Dorsolateral prefrontal cortex (tissue), 120 donors: ENCODE measurements at regions of chr9 and their contacts with region 1.

Region 1: DNA sequence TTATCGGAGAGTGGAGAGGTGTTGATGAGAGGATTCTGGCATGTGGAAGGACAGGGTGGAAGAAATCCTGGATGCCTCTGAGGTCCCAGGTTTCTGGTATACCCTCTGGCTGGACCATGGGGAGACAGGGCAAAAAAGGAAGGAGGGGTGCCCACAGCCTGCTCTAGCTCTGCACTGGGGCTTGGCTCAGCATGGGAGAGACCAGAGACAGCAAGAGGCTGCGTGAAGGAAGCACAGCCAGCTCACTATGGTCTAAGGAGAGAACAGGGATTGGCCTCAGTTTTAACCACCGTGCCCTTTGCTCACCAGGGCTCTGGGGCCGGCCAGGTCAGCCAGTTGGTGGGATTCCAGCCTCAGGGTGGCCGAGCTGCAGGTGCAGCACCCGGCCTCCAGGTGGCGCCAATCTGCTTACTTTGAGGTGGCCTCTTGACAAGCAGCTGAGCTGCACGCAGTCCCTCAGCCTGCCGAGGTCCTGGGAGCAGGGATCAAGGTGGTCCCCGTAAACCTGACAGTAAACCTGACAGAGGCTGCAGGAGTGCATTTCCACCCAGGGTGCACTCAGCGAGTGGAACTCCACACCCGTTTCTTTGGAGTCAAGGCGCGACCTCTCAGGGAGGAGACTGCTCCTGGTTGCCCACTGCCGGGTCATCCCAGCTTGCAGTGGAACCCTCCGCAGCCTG is 25.0 kb upstream of the SPTLC1 start:
- DNase-seq: peak; percentile 59 to 77 (median 67)
- H3K4me3 ChIP-seq: peak overlapping the region in 33 of 59 donors; percentile 11 to 61 (median 41)
- H3K27ac ChIP-seq: no peak overlapping the region
- H3K27me3 ChIP-seq: peaks cover 0 to 24% (median 12%) of the 10 kb centered on the region in 45 donors
- CTCF ChIP-seq: peak; percentile 66 to 95 (median 89)

Region 2: DNA sequence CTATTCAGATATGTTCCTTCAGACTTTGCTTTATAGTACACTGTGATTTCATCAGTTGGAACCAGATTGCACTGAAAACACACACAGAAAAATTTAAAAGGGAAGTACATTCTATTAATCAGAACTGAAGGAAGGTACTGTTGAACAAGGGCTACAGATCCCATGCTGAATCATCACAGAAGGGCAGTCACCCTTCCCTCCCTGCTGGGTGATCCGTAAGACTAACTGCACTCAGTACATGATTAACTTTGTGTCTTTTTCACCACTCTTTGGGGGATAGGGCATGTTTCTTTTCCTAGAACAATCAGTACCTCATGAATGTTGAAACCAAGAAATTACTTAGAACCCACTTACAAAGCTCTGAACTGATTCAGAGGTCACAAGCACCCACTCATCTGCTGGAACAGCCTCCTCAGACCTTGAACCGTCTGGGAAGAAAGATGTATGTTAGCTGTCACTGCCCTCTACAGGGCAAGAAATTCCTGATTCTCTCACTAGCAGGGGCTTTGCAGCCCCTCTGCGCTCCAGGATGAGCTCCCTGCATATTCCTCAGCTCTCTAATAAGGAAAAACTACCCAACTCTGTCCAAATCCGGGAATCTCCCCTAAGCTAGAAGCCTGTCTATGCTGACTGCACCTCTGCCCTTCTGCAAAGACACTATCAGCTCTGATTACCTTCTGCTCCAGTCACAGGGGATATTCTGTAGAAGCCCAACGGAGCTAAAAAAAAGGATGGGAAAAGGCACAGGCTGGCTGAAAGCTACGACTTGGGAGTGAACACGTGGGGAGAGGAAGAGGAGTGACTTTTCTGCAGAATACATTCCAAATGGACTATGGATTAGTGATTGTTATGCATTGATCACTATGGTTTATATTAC is 102.3 kb after region 1 on chr9:
- intact Hi-C with region 1: loop called (anchors 2 kb)
- DNase-seq: no peak
- H3K4me3 ChIP-seq: no peak overlapping the region
- H3K27ac ChIP-seq: no peak overlapping the region
- H3K27me3 ChIP-seq: no peaks in the 10 kb centered on the region
- CTCF ChIP-seq: peak in 47 of 56 donors; percentile 14 to 59 (median 41)

Region 3: GRCh38 chr9:92293452-92294296 is 153.5 kb after region 1 on chr9 and contains the start of gene IARS1:
- intact Hi-C with region 1: loop called (anchors 5 to 10 kb)
- DNase-seq: peak; percentile 96 to 100 (median 99)
- H3K4me3 ChIP-seq: peak within 1 kb of the TSS; percentile 58 to 99 (median 85)
- H3K27ac ChIP-seq: peak within 1 kb of the TSS in 51 of 59 donors; percentile 26 to 83 (median 63)
- H3K27me3 ChIP-seq: no peaks in the 10 kb centered on the region
- CTCF ChIP-seq: peak in 55 of 56 donors; percentile 14 to 84 (median 66)
- total RNA-seq, gene IARS1: 50.3 to 131 (median 98.3) TPM

Region 4: GRCh38 chr9:92634712-92635605 is 494.7 kb after region 1 on chr9:
- intact Hi-C with region 1: loop called (anchors 2 to 5 kb)
- DNase-seq: peak; percentile 60 to 84 (median 72)
- H3K4me3 ChIP-seq: no peak overlapping the region
- H3K27ac ChIP-seq: peak overlapping the region in 22 of 59 donors; percentile 1 to 63 (median 40)
- H3K27me3 ChIP-seq: no peaks in the 10 kb centered on the region
- CTCF ChIP-seq: peak; percentile 71 to 98 (median 92)

Region 5: DNA sequence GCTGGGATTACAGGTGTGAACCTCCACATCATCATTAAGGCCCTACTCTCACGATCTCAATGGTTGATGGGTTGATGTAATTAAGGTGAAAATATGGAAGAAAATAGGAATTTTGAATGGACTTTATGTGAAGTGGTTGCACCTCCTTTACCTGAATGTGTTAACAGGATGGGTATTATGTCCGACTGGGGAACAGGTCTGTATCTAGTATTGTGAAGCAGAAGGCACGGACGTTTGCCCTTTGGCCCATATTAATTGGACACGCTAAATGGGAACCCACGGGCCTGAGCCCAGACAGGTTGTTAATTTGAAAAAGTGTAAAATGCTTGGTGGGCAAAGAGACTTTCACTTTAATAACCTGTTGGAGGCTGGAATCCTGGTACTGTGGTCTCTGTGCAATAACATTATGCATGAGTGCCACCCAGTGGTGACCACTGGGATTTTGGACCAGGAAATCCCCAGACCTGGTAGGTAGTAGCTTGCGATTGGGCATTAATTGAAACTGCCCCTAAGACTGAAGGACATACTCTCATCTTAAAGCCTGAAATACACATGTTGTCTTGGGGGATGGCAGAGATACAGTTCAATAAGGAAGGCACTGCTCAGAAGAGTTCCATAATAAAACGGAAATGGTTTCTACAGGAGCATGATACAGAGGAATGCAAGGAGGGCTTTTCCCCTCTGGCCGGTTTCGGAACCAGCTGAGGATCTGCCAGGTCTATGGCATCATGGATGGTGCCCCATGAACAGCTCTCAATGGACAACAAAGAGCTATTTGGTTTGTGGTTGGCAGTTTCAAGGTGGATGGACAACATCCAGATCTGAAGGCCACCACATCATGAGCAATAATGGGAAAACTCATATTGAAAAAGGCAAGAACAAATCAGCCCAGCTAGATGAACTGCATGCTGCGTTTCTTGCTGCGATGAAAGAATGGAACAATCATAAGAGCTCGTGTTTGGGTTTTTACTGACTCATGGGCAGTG is 650.6 kb after region 1 on chr9:
- intact Hi-C with region 1: loop called (anchors 5 to 10 kb)
- DNase-seq: peak; percentile 70 to 90 (median 80)
- H3K4me3 ChIP-seq: peak overlapping the region in 30 of 59 donors; percentile 4 to 53 (median 30)
- H3K27ac ChIP-seq: no peak overlapping the region
- H3K27me3 ChIP-seq: peaks cover 0 to 4% (median 0%) of the 10 kb centered on the region in 45 donors
- CTCF ChIP-seq: peak; percentile 73 to 98 (median 88)